H1 (cell line): ENCODE measurements at regions of chr11 and their contacts with region 1.

Region 1: DNA sequence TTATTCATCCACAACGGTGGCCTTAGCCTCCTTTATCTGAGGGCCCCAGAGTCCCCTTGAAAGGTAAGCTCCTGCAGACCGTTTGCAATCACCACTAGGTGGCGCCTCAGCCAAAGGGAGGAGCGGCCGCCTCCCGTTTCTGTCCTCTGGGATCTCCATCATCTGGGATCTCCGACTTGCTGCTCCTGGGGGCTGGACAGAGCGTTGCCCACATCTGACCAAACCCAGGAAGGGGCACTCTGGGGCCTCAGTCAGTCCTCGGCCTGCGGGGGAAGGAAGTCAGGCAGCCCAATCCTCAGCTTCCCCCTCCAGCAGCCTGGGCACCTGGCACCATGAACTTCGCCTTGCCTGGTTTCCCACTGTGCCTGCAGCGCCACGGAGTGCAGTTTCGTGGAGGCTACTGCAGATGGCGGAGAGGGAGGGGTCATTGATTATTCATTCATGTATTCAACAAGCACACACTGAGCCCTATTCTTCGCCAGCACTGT is 23.5 kb downstream of the TP53I11 start:
- DNase-seq: peak; percentile 70 to 91
- H3K4me3 ChIP-seq: peak overlapping the region in 1 of 4 experiments; percentile 20; a peak in 1 of 8 replicates
- H3K27ac ChIP-seq: no peak overlapping the region
- H3K4me1 ChIP-seq: peaks cover 0 to 18% (median 13%) of the 10 kb centered on the region in 4 experiments; a peak in 6 of 7 replicates
- H3K27me3 ChIP-seq: no peaks in the 10 kb centered on the region
- CTCF ChIP-seq: peak; percentile 84 to 95 (median 93)
- EP300 ChIP-seq: no peak
- POLR2A ChIP-seq: no peak
- RAD21 ChIP-seq: peak; percentile 86 to 93

Region 2: GRCh38 chr11:45025716-45026492 is 98.7 kb after region 1 on chr11:
- CTCF ChIA-PET with region 1: interaction called, 18 read pairs
- POLR2A ChIA-PET with region 1: no interaction called
- DNase-seq: no peak
- H3K4me3 ChIP-seq: no peak overlapping the region
- H3K27ac ChIP-seq: no peak overlapping the region
- H3K4me1 ChIP-seq: peaks cover 6 to 16% (median 11%) of the 10 kb centered on the region in 4 experiments; a peak in 6 of 7 replicates
- H3K27me3 ChIP-seq: no peaks in the 10 kb centered on the region
- CTCF ChIP-seq: no peak
- EP300 ChIP-seq: no peak
- POLR2A ChIP-seq: no peak
- RAD21 ChIP-seq: no peak

Region 3: DNA sequence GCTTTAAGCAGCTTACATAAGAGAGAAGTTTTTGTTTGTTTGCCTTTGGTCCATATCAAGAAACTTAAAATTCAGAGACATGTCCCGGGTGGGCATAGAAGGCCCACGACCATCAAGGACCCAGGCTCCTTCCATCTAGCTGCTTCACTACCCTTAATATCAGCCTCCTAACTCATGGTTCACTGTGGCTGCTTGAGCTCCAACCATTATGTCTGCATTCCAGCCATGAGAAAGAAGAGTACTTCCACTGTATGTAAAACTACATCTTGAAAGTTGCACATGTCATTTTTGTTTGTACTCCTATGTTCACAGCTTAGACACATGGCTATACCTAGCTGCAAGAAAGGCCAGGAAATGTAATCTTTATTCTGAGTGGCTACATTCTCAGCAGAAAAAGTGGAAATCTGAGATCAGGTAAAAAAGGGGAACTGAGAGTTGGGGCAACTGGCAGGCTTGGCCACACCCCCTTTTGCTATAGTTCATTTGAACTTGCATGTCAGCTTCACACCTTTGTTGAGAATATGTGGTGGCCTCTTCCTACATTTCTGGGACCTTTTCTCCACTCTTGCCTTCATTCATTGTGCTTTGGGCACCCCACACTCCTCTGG is 104.8 kb after region 1 on chr11:
- CTCF ChIA-PET with region 1: interaction called, 11 read pairs
- POLR2A ChIA-PET with region 1: no interaction called
- DNase-seq: no peak
- H3K4me3 ChIP-seq: no peak overlapping the region
- H3K27ac ChIP-seq: no peak overlapping the region
- H3K4me1 ChIP-seq: no peaks in the 10 kb centered on the region
- H3K27me3 ChIP-seq: no peaks in the 10 kb centered on the region
- CTCF ChIP-seq: no peak
- EP300 ChIP-seq: no peak
- POLR2A ChIP-seq: no peak
- RAD21 ChIP-seq: no peak

Region 4: GRCh38 chr11:45141171-45141570 is 214.0 kb after region 1 on chr11:
- CTCF ChIA-PET with region 1: no interaction called
- POLR2A ChIA-PET with region 1: no interaction called
- DNase-seq: no peak
- H3K4me3 ChIP-seq: no peak overlapping the region
- H3K27ac ChIP-seq: no peak overlapping the region
- H3K4me1 ChIP-seq: peaks cover 0 to 5% (median 1%) of the 10 kb centered on the region in 4 experiments; a peak in 3 of 7 replicates
- H3K27me3 ChIP-seq: peaks cover 0 to 20% (median 10%) of the 10 kb centered on the region in 4 experiments; a peak in 5 of 7 replicates
- CTCF ChIP-seq: no peak
- EP300 ChIP-seq: no peak
- POLR2A ChIP-seq: no peak
- RAD21 ChIP-seq: no peak